Cardiac septum (tissue), 1 donor: ENCODE measurements at regions of chr16 and their contacts with region 1.

Region 1: DNA sequence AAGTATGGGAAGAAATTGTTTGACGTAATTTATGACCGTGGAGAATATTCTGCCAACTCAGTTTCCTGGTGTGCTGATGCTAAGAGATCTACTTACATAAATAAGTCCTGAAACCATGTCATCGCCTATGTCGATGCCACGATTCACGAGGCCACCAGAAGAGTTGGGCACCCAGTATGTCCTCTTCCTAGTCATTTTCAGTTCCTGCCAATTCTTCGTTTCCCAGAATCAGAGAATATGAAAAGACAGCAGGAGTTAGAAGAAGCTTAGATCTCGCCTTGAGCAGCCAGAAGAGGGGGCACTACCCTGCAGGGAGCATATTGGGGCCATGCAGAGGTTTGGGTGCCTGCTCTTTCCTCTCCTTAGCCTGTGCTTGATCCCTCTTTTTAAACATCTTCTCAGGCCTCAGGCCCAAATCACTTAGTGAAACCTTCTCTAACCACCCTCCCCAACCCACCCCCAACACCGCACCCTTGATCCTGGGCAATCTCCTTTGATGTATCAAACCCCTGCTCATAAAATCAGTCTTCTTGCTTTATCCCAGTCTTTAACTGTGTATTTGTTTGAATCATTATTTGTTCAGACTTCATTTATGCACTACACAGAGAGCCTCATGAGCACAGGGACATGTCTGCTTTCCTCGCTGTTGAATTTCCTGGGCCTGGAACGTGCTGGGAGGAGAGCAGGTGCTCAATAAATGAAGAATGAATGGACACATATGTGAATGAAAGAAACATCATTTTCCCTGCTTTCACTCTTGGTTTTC is 12.2 kb upstream of the LONP2 start:
- DNase-seq: no peak

Region 2: GRCh38 chr16:48123104-48123788 is 108.7 kb before region 1 on chr16:
- intact Hi-C with region 1: no loop called
- DNase-seq: no peak

Region 3: GRCh38 chr16:48373258-48374029 is 141.5 kb after region 1 on chr16:
- intact Hi-C with region 1: no loop called
- DNase-seq: no peak

Region 4: DNA sequence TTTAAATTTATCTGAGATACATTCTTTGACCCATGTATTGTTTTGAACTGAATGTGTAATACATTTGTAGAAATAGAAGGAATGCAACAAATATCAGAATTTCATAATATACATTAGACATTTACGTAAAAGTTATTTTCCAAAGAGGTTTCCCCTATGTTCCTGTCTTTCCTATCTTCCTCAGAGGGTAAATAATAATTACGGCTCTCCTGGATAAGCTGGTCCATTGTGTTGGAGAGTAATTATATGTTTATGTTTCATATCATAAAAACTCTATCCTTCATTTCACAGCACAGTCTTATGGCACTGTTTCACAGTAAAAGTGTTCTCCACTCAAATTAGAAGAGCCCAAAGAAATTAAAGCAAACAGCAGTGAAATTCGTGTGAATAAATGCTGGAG is 238.3 kb after region 1 on chr16:
- intact Hi-C with region 1: no loop called
- DNase-seq: no peak

Region 5: DNA sequence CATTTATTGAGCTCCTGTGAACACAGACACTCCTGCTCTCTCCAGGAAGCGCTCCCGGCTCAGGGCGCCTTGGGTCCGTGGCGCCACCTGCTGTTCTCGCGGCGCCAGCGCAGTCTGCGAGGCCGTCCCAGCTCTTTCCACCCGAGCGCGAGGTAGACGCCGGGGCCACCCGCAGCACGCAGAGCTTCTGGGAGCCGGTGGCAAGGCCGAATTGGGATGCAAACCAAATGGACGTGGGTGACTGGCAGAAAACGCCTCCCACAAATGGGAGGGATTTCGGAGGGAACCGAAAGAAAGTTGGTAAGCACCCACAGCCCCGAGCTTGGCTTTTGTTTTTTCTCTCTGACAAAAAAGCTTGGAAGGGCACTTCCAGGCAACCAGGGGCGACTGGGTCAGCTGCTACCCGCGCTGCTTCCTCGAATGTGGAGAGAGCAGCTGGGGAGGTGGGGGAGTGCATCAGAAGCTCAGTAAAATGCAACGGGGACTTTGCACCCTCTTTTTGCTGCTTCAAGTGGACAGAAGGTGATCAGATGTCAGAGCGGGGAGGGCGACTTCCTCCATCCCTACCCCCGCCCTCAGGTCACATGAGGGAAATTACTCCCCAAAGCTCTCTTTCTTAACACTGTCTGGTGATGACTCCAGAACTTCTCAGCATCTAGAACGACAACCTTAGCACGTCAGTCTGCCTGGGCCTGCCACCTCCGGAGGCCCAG is 391.6 kb after region 1 on chr16:
- intact Hi-C with region 1: loop called (anchors 10 kb)
- DNase-seq: peak; percentile 95